Naive thymus-derived CD4-positive, alpha-beta T cell (primary cell): ENCODE measurements at regions of chr17 and their contacts with region 1.

Region 1: DNA sequence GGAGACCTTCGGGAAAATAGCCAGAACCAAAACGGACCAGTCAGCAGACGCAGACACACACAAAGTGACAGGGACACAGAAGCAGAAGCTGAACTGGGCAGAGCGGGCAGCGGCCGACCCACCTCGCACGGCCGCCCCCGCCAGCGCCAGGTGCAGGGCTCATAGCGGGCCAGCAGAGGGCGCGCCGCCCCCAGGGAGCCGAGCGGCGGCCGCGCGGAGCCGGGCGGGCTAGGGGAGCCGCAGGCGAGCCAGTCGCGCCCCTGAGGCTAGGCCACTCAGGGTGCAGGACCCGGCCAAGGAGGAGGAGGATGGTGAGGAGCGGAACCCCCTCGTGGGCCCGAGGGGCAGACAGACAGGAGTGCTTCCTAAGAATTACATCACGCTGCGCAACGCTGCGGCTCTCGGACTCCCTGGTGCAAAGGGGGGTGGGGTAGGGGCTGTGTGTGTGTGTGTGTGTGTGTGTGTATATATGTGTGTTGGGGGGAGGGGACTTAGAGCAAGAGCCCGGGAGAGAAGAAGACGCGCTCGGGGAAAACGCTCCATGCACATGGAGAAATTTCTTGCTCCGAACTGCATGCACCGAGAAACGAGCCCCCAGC is 913 bp upstream of the NOG start:
- DNase-seq: peak in 8 of 9 donors; percentile 65 to 87 (median 81)
- ATAC-seq: peak; percentile 82
- H3K4me3 ChIP-seq: peak overlapping the region; percentile 71
- H3K4me3 Mint-ChIP-seq: peak overlapping the region; percentile 76 to 94 (median 90)
- H3K27ac ChIP-seq: peak overlapping the region; percentile 71
- H3K27ac Mint-ChIP-seq: peak overlapping the region in 8 of 9 donors; percentile 56 to 99 (median 84)
- H3K4me1 ChIP-seq: peaks cover under 1 to 12% of the 10 kb centered on the region in 2 donors
- H3K4me1 Mint-ChIP-seq: peaks cover 5 to 22% (median 14%) of the 10 kb centered on the region in 7 donors
- H3K27me3 ChIP-seq: peaks cover 0 to 5% of the 10 kb centered on the region in 2 donors
- H3K27me3 Mint-ChIP-seq: peaks cover 0 to 61% (median 27%) of the 10 kb centered on the region in 5 donors

Region 2: GRCh38 chr17:55996825-55997224 is 595.8 kb before region 1 on chr17:
- CTCF ChIA-PET with region 1: no interaction called
- POLR2A ChIA-PET with region 1: no interaction called
- intact Hi-C with region 1: no loop called
- DNase-seq: no peak
- ATAC-seq: no peak
- H3K4me3 ChIP-seq: no peak overlapping the region
- H3K4me3 Mint-ChIP-seq: no peak overlapping the region
- H3K27ac ChIP-seq: no peak overlapping the region
- H3K27ac Mint-ChIP-seq: no peak overlapping the region
- H3K4me1 ChIP-seq: no peaks in the 10 kb centered on the region
- H3K4me1 Mint-ChIP-seq: peaks cover 0 to 12% (median 0%) of the 10 kb centered on the region in 7 donors
- H3K27me3 ChIP-seq: no peaks in the 10 kb centered on the region
- H3K27me3 Mint-ChIP-seq: peaks cover 0 to 6% (median 0%) of the 10 kb centered on the region in 5 donors

Region 3: GRCh38 chr17:56441331-56441730 is 151.3 kb before region 1 on chr17:
- CTCF ChIA-PET with region 1: no interaction called
- POLR2A ChIA-PET with region 1: no interaction called
- intact Hi-C with region 1: no loop called
- DNase-seq: no peak
- ATAC-seq: no peak
- H3K4me3 ChIP-seq: no peak overlapping the region
- H3K4me3 Mint-ChIP-seq: no peak overlapping the region
- H3K27ac ChIP-seq: no peak overlapping the region
- H3K27ac Mint-ChIP-seq: no peak overlapping the region
- H3K4me1 ChIP-seq: no peaks in the 10 kb centered on the region
- H3K4me1 Mint-ChIP-seq: no peaks in the 10 kb centered on the region
- H3K27me3 ChIP-seq: no peaks in the 10 kb centered on the region
- H3K27me3 Mint-ChIP-seq: peaks cover 12 to 23% (median 15%) of the 10 kb centered on the region in 5 donors

Region 4: DNA sequence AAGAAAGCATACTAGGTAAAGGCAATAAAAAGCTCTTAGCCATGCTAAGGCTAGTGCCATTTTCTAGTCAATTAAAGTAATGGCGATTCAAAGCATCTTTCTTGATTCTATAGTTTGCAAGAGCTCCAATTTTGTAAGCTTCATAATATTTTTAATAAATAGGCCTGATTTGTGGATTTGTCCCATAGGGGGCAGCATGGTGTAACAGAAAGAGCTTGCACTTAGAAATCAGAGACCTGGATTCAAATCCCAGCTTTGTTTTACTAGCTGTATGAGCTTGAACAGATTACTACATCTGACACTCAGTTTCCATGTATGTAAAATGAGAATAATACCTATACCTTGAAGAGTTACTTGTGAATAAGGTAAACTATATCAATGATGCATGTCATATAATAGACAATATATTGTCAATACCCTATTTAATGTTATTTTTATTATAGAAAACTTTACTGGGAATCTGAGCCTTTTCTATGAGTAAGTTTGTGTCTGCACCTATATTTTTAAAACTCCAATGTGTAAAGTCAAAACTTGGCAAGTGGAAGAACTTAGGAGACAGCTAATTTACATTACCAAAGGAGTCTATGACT is 92.7 kb before region 1 on chr17:
- CTCF ChIA-PET with region 1: no interaction called
- POLR2A ChIA-PET with region 1: no interaction called
- intact Hi-C with region 1: loop called in 1 of 2 experiments (anchors 1 kb)
- DNase-seq: peak in 7 of 9 donors; percentile 7 to 45 (median 32)
- ATAC-seq: no peak
- H3K4me3 ChIP-seq: no peak overlapping the region
- H3K4me3 Mint-ChIP-seq: no peak overlapping the region
- H3K27ac ChIP-seq: no peak overlapping the region
- H3K27ac Mint-ChIP-seq: no peak overlapping the region
- H3K4me1 ChIP-seq: no peaks in the 10 kb centered on the region
- H3K4me1 Mint-ChIP-seq: no peaks in the 10 kb centered on the region
- H3K27me3 ChIP-seq: no peaks in the 10 kb centered on the region
- H3K27me3 Mint-ChIP-seq: peaks cover 0 to 6% (median 0%) of the 10 kb centered on the region in 5 donors

Region 5: DNA sequence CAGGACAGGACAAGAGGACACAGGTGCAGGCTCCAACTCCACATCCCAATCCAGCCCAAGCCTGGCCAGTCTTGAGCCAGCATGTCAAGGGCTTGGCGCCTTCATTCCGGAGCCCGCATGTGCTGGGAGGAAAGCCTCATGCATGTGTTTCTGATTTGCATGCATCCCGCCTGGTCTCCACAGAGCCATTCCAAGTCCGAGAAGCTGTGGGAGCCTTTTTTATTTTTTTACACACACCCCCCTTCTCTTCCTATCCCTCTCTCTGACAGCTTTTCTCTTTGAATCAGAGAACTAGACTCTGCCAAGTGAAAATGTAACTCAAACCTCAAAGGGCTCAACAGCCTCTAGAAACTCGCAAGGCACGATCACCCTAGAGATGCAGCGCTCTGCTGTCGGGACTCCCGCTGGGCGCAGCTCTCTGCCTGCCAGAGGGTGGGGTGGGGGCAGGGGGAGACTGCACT is 46.0 kb after region 1 on chr17:
- CTCF ChIA-PET with region 1: interaction called, 29 read pairs
- POLR2A ChIA-PET with region 1: interaction called, 5 read pairs
- intact Hi-C with region 1: loop called in 1 of 2 experiments (anchors 1 kb)
- DNase-seq: no peak
- ATAC-seq: no peak
- H3K4me3 ChIP-seq: no peak overlapping the region
- H3K4me3 Mint-ChIP-seq: no peak overlapping the region
- H3K27ac ChIP-seq: no peak overlapping the region
- H3K27ac Mint-ChIP-seq: no peak overlapping the region
- H3K4me1 ChIP-seq: no peaks in the 10 kb centered on the region
- H3K4me1 Mint-ChIP-seq: peaks cover 0 to 30% (median 13%) of the 10 kb centered on the region in 7 donors
- H3K27me3 ChIP-seq: no peaks in the 10 kb centered on the region
- H3K27me3 Mint-ChIP-seq: peaks cover 0 to 15% (median 0%) of the 10 kb centered on the region in 5 donors

Region 6: DNA sequence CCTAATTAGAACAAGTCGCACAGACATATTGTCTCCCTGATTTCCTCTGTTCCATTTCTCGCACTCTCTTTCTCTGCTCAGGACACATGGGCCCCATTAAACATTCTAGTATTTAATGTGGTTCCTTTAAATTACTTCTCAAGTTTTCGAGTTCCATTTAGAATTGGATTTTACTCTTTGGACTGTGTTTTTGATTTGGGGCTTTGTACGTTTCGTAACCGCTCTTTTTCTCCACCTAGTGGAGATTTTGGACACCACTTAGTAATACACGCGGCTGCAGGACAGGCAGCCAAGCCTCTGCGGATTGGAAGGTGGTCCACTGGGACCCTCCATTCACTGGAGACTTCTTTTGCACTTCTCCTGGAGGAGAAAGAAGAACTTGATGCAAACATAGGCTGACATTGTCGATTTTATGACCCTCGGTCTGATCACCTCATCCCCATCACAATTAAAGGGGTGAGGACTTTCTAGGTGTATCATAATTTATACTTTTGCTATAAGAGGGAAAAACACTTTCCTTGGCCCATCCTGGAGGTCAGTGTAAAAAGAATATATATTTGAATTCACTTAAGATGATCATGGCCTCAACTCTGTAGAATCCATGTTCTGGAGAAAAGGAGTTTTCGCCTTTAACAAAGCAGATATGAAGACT is 86.7 kb after region 1 on chr17:
- CTCF ChIA-PET with region 1: interaction called, 5 read pairs
- POLR2A ChIA-PET with region 1: interaction called, 10 read pairs
- intact Hi-C with region 1: loop called (anchors 1 kb)
- DNase-seq: peak in 5 of 9 donors; percentile 30 to 47 (median 40)
- ATAC-seq: peak; percentile 65
- H3K4me3 ChIP-seq: peak overlapping the region; percentile 40
- H3K4me3 Mint-ChIP-seq: peak overlapping the region in 9 of 10 donors; percentile 77 to 91 (median 86)
- H3K27ac ChIP-seq: no peak overlapping the region
- H3K27ac Mint-ChIP-seq: peak overlapping the region in 2 of 9 donors; percentile 9 to 10
- H3K4me1 ChIP-seq: peaks cover 19 to 20% of the 10 kb centered on the region in 2 donors
- H3K4me1 Mint-ChIP-seq: peaks cover 7 to 23% (median 17%) of the 10 kb centered on the region in 7 donors
- H3K27me3 ChIP-seq: no peaks in the 10 kb centered on the region
- H3K27me3 Mint-ChIP-seq: peaks cover 12 to 52% (median 31%) of the 10 kb centered on the region in 5 donors

Region 7: GRCh38 chr17:56762988-56763387 is 170.4 kb after region 1 on chr17:
- CTCF ChIA-PET with region 1: no interaction called
- POLR2A ChIA-PET with region 1: interaction called, 16 read pairs
- intact Hi-C with region 1: no loop called
- DNase-seq: peak in 7 of 9 donors; percentile 17 to 35 (median 27)
- ATAC-seq: no peak
- H3K4me3 ChIP-seq: no peak overlapping the region
- H3K4me3 Mint-ChIP-seq: peak overlapping the region in 9 of 10 donors; percentile 5 to 63 (median 53)
- H3K27ac ChIP-seq: peak overlapping the region; percentile 30
- H3K27ac Mint-ChIP-seq: peak overlapping the region; percentile 26 to 95 (median 65)
- H3K4me1 ChIP-seq: peaks cover 0 to 14% of the 10 kb centered on the region in 2 donors
- H3K4me1 Mint-ChIP-seq: peaks cover 13 to 30% (median 23%) of the 10 kb centered on the region in 7 donors
- H3K27me3 ChIP-seq: no peaks in the 10 kb centered on the region
- H3K27me3 Mint-ChIP-seq: peaks cover 0 to 5% (median 0%) of the 10 kb centered on the region in 5 donors

Region 8: DNA sequence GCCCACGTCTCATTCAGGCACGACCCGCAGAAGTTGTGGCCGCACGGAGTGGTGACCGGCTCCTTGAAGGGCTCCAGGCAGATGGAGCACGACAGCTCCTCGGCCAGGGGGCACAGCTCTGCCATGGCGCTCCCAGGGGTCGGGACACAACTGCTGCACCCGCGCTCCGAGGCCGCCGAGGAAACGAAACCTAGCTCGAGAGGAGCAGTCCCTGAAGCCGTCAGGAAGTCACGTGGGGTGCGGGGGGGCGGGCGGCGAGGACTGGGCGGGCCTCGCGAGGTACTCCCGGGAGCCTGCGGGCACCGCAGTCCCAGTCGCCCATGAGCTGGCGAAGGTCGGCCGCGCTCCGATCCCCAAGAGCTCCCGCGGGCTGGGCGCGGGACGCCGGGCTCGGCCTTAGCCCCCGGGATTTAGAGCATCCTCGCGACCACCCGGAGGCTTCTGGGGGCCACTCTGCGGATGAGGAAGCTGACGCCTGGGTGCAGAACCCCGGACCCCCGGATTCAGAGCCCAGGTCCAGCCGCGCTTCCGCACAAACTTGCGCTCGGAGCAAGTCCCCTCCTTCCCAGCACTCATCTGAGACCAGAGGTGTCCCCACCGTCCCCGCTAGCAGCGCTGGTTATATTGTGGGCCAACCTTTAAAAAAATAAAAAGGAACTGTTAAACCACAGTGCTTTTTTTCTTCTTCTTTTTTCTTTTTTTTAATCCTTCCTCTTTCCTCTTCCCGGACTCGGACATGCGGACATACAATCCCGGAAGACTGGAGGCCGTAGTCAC is 321.5 kb after region 1 on chr17 and contains the start of gene TRIM25:
- CTCF ChIA-PET with region 1: interaction called, 3 read pairs
- POLR2A ChIA-PET with region 1: interaction called, 3 read pairs
- intact Hi-C with region 1: loop called in 1 of 2 experiments (anchors 5 kb)
- DNase-seq: peak; percentile 57 to 90 (median 79)
- ATAC-seq: peak; percentile 91
- H3K4me3 ChIP-seq: peak within 1 kb of the TSS; percentile 93
- H3K4me3 Mint-ChIP-seq: peak within 1 kb of the TSS; percentile 80 to 97 (median 91)
- H3K27ac ChIP-seq: peak within 1 kb of the TSS; percentile 90
- H3K27ac Mint-ChIP-seq: peak within 1 kb of the TSS; percentile 88 to 95 (median 93)
- H3K4me1 ChIP-seq: peaks cover 29 to 35% of the 10 kb centered on the region in 2 donors
- H3K4me1 Mint-ChIP-seq: peaks cover 20 to 52% (median 46%) of the 10 kb centered on the region in 7 donors
- H3K27me3 ChIP-seq: no peaks in the 10 kb centered on the region
- H3K27me3 Mint-ChIP-seq: no peaks in the 10 kb centered on the region
- total RNA-seq, gene TRIM25: 45.9 to 133 (median 61.8) TPM

Region 9: GRCh38 chr17:57261084-57261461 is 668.5 kb after region 1 on chr17:
- CTCF ChIA-PET with region 1: no interaction called
- POLR2A ChIA-PET with region 1: no interaction called
- intact Hi-C with region 1: no loop called
- DNase-seq: peak in 1 of 9 donors; percentile 21
- ATAC-seq: no peak
- H3K4me3 ChIP-seq: no peak overlapping the region
- H3K4me3 Mint-ChIP-seq: peak overlapping the region in 8 of 10 donors; percentile 7 to 95 (median 46)
- H3K27ac ChIP-seq: no peak overlapping the region
- H3K27ac Mint-ChIP-seq: peak overlapping the region in 2 of 9 donors; percentile 48 to 86
- H3K4me1 ChIP-seq: peaks cover 13 to 35% of the 10 kb centered on the region in 2 donors
- H3K4me1 Mint-ChIP-seq: peaks cover 37 to 83% (median 74%) of the 10 kb centered on the region in 7 donors
- H3K27me3 ChIP-seq: no peaks in the 10 kb centered on the region
- H3K27me3 Mint-ChIP-seq: no peaks in the 10 kb centered on the region

Region 10: GRCh38 chr17:58337600-58338453 is 1745.2 kb after region 1 on chr17:
- CTCF ChIA-PET with region 1: no interaction called
- POLR2A ChIA-PET with region 1: interaction called, 3 read pairs
- intact Hi-C with region 1: loop called in 1 of 2 experiments (anchors 5 kb)
- DNase-seq: peak; percentile 73 to 93 (median 85)
- ATAC-seq: peak; percentile 88
- H3K4me3 ChIP-seq: peak overlapping the region; percentile 98
- H3K4me3 Mint-ChIP-seq: peak overlapping the region; percentile 86 to 100 (median 97)
- H3K27ac ChIP-seq: peak overlapping the region; percentile 98
- H3K27ac Mint-ChIP-seq: peak overlapping the region; percentile 89 to 100 (median 95)
- H3K4me1 ChIP-seq: peaks cover 59 to 77% of the 10 kb centered on the region in 2 donors
- H3K4me1 Mint-ChIP-seq: peaks cover 52 to 90% (median 65%) of the 10 kb centered on the region in 7 donors
- H3K27me3 ChIP-seq: no peaks in the 10 kb centered on the region
- H3K27me3 Mint-ChIP-seq: no peaks in the 10 kb centered on the region